ENCODE measurements at regions of chr1 and their contacts with region 1.

Region 1: DNA sequence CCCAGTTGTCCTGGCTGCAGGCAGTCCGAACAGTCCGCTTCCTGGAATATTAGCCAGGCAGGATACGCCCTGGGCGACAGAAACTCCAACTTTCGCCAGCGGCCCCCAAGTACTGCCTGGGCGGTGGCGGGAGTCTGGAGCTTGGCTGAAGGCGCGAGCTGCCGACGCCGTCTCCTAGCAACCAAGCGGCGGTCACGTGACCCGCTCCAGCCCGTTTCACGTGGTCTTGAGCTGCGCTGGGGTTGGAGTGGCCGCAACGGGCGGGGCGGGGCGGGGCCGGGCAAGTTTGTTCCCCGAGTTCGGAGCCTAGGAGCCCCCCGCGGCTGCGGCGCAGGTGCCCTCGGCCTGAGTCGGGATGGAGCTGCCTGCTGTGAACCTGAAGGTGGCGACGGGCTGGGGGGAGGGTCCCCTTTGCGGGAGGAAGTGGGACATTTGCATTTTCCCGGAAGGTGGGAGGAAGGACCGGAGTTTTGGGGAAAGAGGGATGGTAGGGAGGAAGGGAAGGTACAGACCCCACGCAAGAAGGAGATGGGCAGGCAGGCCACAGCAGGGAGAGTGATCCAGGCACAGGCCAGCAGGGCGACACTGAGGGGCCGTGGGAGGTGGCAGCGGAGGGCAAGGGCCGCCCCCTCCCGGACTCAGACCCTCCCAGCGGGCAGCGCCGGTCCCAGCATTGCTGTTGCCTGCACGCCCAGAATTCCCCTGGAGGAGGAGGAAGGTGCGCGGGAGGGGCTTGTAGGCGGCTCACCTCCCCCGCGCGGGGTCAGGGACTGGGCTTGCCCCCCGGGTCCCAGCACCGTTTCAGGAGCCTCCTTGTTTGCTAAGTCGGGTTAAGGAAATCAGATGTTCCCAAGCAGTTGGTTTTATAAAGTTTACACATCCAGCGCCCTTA is at the start of gene AGTRAP:
- DNase-seq: peak; percentile 93
- H3K4me3 Mint-ChIP-seq: peak within 1 kb of the TSS; percentile 96
- H3K27ac Mint-ChIP-seq: peak within 1 kb of the TSS; percentile 85
- H3K4me1 Mint-ChIP-seq: peaks cover 49% of the 10 kb centered on the region
- H3K27me3 Mint-ChIP-seq: no peaks in the 10 kb centered on the region
- total RNA-seq, gene AGTRAP: 16.5 to 18.0 TPM

Region 2: GRCh38 chr1:11805447-11806306 is 69.6 kb after region 1 on chr1 and contains the starts of genes CLCN6 and MTHFR:
- CTCF ChIA-PET with region 1: no interaction called
- POLR2A ChIA-PET with region 1: interaction called, 3 read pairs
- intact Hi-C with region 1: loop called (anchors 5 kb)
- DNase-seq: peak; percentile 99
- H3K4me3 Mint-ChIP-seq: peak within 1 kb of the TSS; percentile 84
- H3K27ac Mint-ChIP-seq: peak within 1 kb of the TSS; percentile 88
- H3K4me1 Mint-ChIP-seq: peaks cover 51% of the 10 kb centered on the region
- H3K27me3 Mint-ChIP-seq: no peaks in the 10 kb centered on the region
- total RNA-seq, gene CLCN6: 11.3 to 11.6 TPM
- total RNA-seq, gene MTHFR: 12.8 to 13.3 TPM

Region 3: GRCh38 chr1:11882814-11883538 is 146.9 kb after region 1 on chr1:
- CTCF ChIA-PET with region 1: no interaction called
- POLR2A ChIA-PET with region 1: no interaction called
- intact Hi-C with region 1: no loop called
- DNase-seq: no peak
- H3K4me3 Mint-ChIP-seq: no peak overlapping the region
- H3K27ac Mint-ChIP-seq: no peak overlapping the region
- H3K4me1 Mint-ChIP-seq: no peaks in the 10 kb centered on the region
- H3K27me3 Mint-ChIP-seq: peaks cover 9% of the 10 kb centered on the region

Measured in activated CD4-positive, alpha-beta memory T cell treated with anti-CD3 and anti-CD28 coated beads for 36 hours (primary cell).